Mammary epithelial cell (primary cell): ENCODE measurements at regions of chr1 and their contacts with region 1.

Region 1: GRCh38 chr1:51214615-51215131 is 21.4 kb upstream of the RNF11 start:
- DNase-seq: peak; percentile 23
- H3K4me3 ChIP-seq: no peak overlapping the region
- H3K27ac ChIP-seq: no peak overlapping the region
- H3K4me1 ChIP-seq: peaks cover 16% of the 10 kb centered on the region
- H3K27me3 ChIP-seq: no peaks in the 10 kb centered on the region
- CTCF ChIP-seq: no peak

Region 2: GRCh38 chr1:51247022-51247421 is 32.3 kb after region 1 on chr1:
- CTCF ChIA-PET with region 1: interaction called, 14 read pairs
- dilution Hi-C with region 1: no loop called
- in situ Hi-C with region 1: no loop called
- intact Hi-C with region 1: no loop called
- DNase-seq: no peak
- H3K4me3 ChIP-seq: no peak overlapping the region
- H3K27ac ChIP-seq: no peak overlapping the region
- H3K4me1 ChIP-seq: no peaks in the 10 kb centered on the region
- H3K27me3 ChIP-seq: no peaks in the 10 kb centered on the region
- CTCF ChIP-seq: no peak

Region 3: DNA sequence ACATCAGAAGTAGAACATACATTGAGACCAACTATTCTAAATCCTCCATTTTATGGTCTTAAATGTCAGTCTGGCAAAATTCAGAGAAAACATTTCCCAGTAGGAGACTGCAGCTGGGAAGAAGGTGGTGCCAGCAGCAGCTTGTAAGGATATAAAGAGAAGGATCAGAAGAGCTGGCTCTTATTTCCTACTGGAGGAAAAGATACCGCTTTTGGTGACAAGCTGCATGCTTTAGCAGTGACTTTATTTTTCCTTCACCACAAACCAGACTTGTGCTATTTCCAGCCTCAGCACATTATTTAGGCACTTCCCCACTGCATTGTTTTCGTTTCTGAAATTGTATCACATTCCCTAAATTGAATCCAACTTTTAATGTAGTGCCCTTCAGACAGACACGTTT is 49.8 kb after region 1 on chr1:
- CTCF ChIA-PET with region 1: no interaction called
- dilution Hi-C with region 1: no loop called
- in situ Hi-C with region 1: no loop called
- intact Hi-C with region 1: loop called (anchors 5 kb)
- DNase-seq: peak; percentile 62
- H3K4me3 ChIP-seq: no peak overlapping the region
- H3K27ac ChIP-seq: peak overlapping the region; percentile 1
- H3K4me1 ChIP-seq: peaks cover 67% of the 10 kb centered on the region
- H3K27me3 ChIP-seq: no peaks in the 10 kb centered on the region
- CTCF ChIP-seq: no peak

Region 4: DNA sequence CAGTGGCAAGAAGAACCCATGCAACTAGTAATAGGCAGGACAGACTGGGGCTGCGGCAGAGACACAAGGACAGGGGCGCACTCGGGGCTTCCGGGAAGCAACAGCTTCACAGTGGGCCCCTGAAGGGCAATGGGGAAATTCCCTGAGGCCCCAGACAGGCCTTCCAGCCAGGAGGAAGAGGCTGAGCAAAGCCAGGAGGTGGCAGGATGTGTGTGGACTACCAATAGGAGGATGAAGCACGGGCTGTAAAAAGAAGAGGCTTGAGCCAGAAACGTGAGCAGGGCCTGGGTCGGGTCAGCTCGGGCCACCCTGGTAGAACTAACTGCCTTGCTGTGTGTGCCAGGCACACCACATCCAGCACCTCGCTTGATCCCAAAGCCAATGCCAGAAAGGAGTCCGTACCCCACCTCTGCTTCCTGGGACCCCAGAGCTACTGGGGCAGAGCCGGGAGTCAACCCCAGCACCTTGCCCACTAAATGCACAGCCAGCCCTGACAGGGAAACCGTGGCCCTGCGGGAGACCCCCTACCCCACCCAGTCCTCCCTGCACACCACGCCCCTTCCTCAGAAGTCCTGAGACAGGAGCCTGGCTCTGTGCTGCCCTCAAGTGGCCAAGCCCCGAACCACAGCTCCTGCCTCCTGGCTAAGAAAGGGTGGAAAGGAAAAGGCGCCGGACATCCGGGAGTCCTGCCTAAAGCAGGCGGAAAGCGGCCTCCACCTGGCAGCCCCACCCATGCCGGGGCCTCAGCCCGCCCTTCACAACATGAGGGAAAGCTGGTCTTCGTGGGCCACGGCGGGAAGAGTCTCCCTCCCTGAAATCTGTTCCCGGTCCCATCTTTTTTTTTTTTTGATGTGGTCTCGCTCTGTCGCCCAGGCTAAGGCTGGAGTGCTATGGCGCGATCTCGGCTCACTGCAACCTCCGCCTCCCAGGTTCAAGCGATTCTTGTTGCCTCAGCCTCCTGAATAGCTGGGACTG is 82.0 kb after region 1 on chr1:
- CTCF ChIA-PET with region 1: interaction called, 3 read pairs
- dilution Hi-C with region 1: no loop called
- in situ Hi-C with region 1: no loop called
- intact Hi-C with region 1: loop called (anchors 2 kb)
- DNase-seq: peak; percentile 62
- H3K4me3 ChIP-seq: peak overlapping the region in 1 of 3 experiments; percentile 28
- H3K27ac ChIP-seq: no peak overlapping the region
- H3K4me1 ChIP-seq: peaks cover 7% of the 10 kb centered on the region
- H3K27me3 ChIP-seq: no peaks in the 10 kb centered on the region
- CTCF ChIP-seq: peak; percentile 89 to 98